ENCODE measurements at regions of chr1 and their contacts with region 1.

Region 1: GRCh38 chr1:109539676-109540075 is at the start of gene GPR61:
- DNase-seq: no peak
- H3K4me3 ChIP-seq: no peak within 1 kb of the TSS
- H3K27ac ChIP-seq: no peak within 1 kb of the TSS
- H3K4me1 ChIP-seq: no peaks in the 10 kb centered on the region
- H3K27me3 ChIP-seq: no peaks in the 10 kb centered on the region
- CTCF ChIP-seq: no peak
- total RNA-seq, gene GPR61: not detected

Region 2: GRCh38 chr1:109636201-109636952 is 96.7 kb after region 1 on chr1:
- intact Hi-C with region 1: loop called (anchors 5 kb)
- DNase-seq: no peak
- H3K4me3 ChIP-seq: no peak overlapping the region
- H3K27ac ChIP-seq: no peak overlapping the region
- H3K4me1 ChIP-seq: peaks cover 11% of the 10 kb centered on the region
- H3K27me3 ChIP-seq: no peaks in the 10 kb centered on the region
- CTCF ChIP-seq: no peak

Region 3: GRCh38 chr1:109751531-109752260 is 212.0 kb after region 1 on chr1:
- intact Hi-C with region 1: no loop called
- DNase-seq: no peak
- H3K4me3 ChIP-seq: no peak overlapping the region
- H3K27ac ChIP-seq: no peak overlapping the region
- H3K4me1 ChIP-seq: no peaks in the 10 kb centered on the region
- H3K27me3 ChIP-seq: no peaks in the 10 kb centered on the region
- CTCF ChIP-seq: no peak